Colonic mucosa (tissue), 4 donors: ENCODE measurements at regions of chr3 and their contacts with region 1.

Region 1: DNA sequence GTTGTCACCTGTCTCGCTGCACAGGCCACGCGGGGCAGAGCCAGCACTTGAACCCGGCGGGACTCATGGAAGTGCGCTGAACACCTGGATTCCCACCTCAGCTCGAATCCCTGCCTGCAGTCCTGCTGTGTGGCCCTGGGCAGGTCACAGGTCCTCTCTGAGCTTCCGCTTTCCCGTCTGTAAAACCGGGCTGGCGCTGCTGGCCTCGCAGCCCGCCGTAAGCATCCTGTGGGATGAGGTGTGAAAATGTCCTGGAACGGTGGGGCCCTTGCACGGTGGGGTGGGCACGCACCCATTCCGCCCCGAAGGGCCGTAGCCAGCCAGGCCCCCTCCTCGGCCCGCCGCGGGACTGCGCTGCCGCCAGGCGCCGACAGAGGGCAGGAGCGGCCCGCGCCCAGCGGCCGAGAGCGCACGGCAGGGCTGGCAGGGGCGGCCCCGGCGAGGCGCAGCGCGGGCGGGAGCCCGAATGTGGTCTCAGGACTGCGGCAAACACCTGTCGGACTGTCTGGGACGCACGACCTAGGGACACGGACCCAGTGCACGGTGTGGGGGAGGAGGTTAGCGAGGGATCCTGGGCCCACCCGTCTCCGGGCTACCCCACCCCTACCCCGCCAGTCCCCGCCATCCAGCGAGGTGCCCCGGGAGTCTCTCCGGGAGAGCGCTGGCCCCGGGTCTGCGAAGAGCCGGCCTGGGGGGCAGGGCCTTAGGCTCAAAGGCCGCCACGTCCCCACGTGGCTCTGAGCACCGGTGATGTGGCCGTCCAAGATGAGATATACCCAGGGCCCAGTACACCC is 40.4 kb downstream of the DNAJB8 start:
- DNase-seq: peak; percentile 32
- H3K4me3 ChIP-seq: peak overlapping the region; percentile 12
- H3K27ac ChIP-seq: no peak overlapping the region
- H3K4me1 ChIP-seq: peaks cover 3% of the 10 kb centered on the region
- H3K27me3 ChIP-seq: no peaks in the 10 kb centered on the region
- CTCF ChIP-seq: peak; percentile 70

Region 2: GRCh38 chr3:128343287-128344051 is 82.9 kb before region 1 on chr3:
- intact Hi-C with region 1: no loop called
- DNase-seq: peak; percentile 41
- H3K4me3 ChIP-seq: no peak overlapping the region
- H3K27ac ChIP-seq: no peak overlapping the region
- H3K4me1 ChIP-seq: no peaks in the 10 kb centered on the region
- H3K27me3 ChIP-seq: no peaks in the 10 kb centered on the region
- CTCF ChIP-seq: no peak

Region 3: GRCh38 chr3:128497387-128498126 is 71.2 kb after region 1 on chr3:
- intact Hi-C with region 1: loop called (anchors 5 kb)
- DNase-seq: peak; percentile 73
- H3K4me3 ChIP-seq: peak overlapping the region; percentile 35
- H3K27ac ChIP-seq: no peak overlapping the region
- H3K4me1 ChIP-seq: peaks cover 13% of the 10 kb centered on the region
- H3K27me3 ChIP-seq: peaks cover 47% of the 10 kb centered on the region
- CTCF ChIP-seq: peak; percentile 55

Region 4: GRCh38 chr3:128584412-128585020 is 158.2 kb after region 1 on chr3:
- intact Hi-C with region 1: loop called (anchors 5 kb)
- DNase-seq: peak; percentile 72
- H3K4me3 ChIP-seq: no peak overlapping the region
- H3K27ac ChIP-seq: no peak overlapping the region
- H3K4me1 ChIP-seq: no peaks in the 10 kb centered on the region
- H3K27me3 ChIP-seq: no peaks in the 10 kb centered on the region
- CTCF ChIP-seq: peak; percentile 46

Region 5: DNA sequence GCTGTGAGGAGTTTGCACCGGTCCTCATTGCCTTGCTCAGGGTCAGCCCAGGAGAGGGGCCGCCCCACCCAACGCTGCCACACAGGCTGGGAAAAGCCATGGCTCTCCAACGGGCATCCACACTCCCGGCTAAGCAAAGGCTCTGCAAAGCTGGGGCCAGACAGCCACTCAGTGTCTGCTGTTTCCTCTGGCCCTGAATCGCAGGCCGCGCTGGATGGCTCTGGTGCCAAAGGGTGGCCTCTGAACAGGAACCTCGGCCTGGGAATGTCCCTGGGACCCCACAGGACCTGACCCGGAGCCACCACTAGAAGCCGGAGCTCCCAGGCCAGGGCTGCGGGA is 181.4 kb after region 1 on chr3:
- intact Hi-C with region 1: loop called (anchors 5 kb)
- DNase-seq: no peak
- H3K4me3 ChIP-seq: peak overlapping the region; percentile 64
- H3K27ac ChIP-seq: no peak overlapping the region
- H3K4me1 ChIP-seq: no peaks in the 10 kb centered on the region
- H3K27me3 ChIP-seq: no peaks in the 10 kb centered on the region
- CTCF ChIP-seq: no peak

Region 6: GRCh38 chr3:128655531-128655930 is 229.2 kb after region 1 on chr3:
- intact Hi-C with region 1: no loop called
- DNase-seq: no peak
- H3K4me3 ChIP-seq: no peak overlapping the region
- H3K27ac ChIP-seq: no peak overlapping the region
- H3K4me1 ChIP-seq: no peaks in the 10 kb centered on the region
- H3K27me3 ChIP-seq: no peaks in the 10 kb centered on the region
- CTCF ChIP-seq: no peak